CD8-positive, alpha-beta memory T cell (primary cell): ENCODE measurements at regions of chr15 and their contacts with region 1.

Region 1: GRCh38 chr15:60859996-60860494 is 369.1 kb downstream of the RORA start:
- DNase-seq: no peak
- H3K4me3 ChIP-seq: no peak overlapping the region
- H3K4me3 Mint-ChIP-seq: peak overlapping the region in 5 of 7 donors; percentile 28 to 62 (median 34)
- H3K27ac ChIP-seq: no peak overlapping the region
- H3K27ac Mint-ChIP-seq: no peak overlapping the region
- H3K4me1 ChIP-seq: peaks cover 6% of the 10 kb centered on the region
- H3K4me1 Mint-ChIP-seq: peaks cover 30 to 58% (median 42%) of the 10 kb centered on the region in 3 donors
- H3K27me3 ChIP-seq: no peaks in the 10 kb centered on the region
- H3K27me3 Mint-ChIP-seq: no peaks in the 10 kb centered on the region

Region 2: GRCh38 chr15:60844511-60845174 is 15.4 kb before region 1 on chr15:
- CTCF ChIA-PET with region 1: interaction called, 28 read pairs
- POLR2A ChIA-PET with region 1: interaction called, 3 read pairs
- DNase-seq: peak; percentile 57 to 88 (median 85)
- H3K4me3 ChIP-seq: peak overlapping the region; percentile 26
- H3K4me3 Mint-ChIP-seq: peak overlapping the region; percentile 36 to 88 (median 83)
- H3K27ac ChIP-seq: peak overlapping the region; percentile 18
- H3K27ac Mint-ChIP-seq: peak overlapping the region; percentile 60 to 94 (median 91)
- H3K4me1 ChIP-seq: peaks cover 78% of the 10 kb centered on the region
- H3K4me1 Mint-ChIP-seq: peaks cover 80 to 96% (median 85%) of the 10 kb centered on the region in 3 donors
- H3K27me3 ChIP-seq: no peaks in the 10 kb centered on the region
- H3K27me3 Mint-ChIP-seq: no peaks in the 10 kb centered on the region

Region 3: DNA sequence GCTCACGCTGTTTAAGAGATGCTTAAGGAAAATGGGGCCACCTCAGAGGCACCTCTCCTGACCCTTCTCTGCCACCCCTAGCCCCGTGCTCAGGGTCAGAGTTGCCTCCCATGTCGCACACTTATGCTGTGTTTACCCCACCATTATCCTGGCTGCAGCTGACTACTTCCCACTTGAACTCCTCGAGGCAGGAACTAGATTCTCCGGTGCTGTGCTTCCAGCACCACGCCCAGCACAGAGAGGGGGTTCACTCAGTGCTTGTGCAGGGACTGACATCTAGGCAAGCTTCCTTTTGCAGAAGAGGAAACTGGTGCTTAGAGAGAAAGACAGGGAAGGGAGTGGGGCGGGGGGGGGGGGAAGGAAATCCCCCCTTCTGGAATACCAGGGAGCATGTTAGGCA is 29.0 kb after region 1 on chr15:
- CTCF ChIA-PET with region 1: no interaction called
- POLR2A ChIA-PET with region 1: no interaction called
- DNase-seq: no peak
- H3K4me3 ChIP-seq: no peak overlapping the region
- H3K4me3 Mint-ChIP-seq: peak overlapping the region in 1 of 7 donors; percentile 51
- H3K27ac ChIP-seq: no peak overlapping the region
- H3K27ac Mint-ChIP-seq: no peak overlapping the region
- H3K4me1 ChIP-seq: no peaks in the 10 kb centered on the region
- H3K4me1 Mint-ChIP-seq: peaks cover 0 to 4% (median 0%) of the 10 kb centered on the region in 3 donors
- H3K27me3 ChIP-seq: no peaks in the 10 kb centered on the region
- H3K27me3 Mint-ChIP-seq: peaks cover 0 to 5% of the 10 kb centered on the region in 2 donors